CD4-positive, alpha-beta T cell (primary cell): ENCODE measurements at regions of chr21 and their contacts with region 1.

Region 1: GRCh38 chr21:46323227-46324128 is at the start of gene C21orf58:
- DNase-seq: peak; percentile 95 to 99 (median 98)
- ATAC-seq: peak; percentile 81
- H3K4me3 ChIP-seq: peak within 1 kb of the TSS; percentile 96
- H3K4me3 Mint-ChIP-seq: peak within 1 kb of the TSS; percentile 96
- H3K27ac ChIP-seq: peak within 1 kb of the TSS; percentile 96 to 100
- H3K27ac Mint-ChIP-seq: peak within 1 kb of the TSS; percentile 99
- H3K4me1 ChIP-seq: peaks cover 28% of the 10 kb centered on the region
- H3K4me1 Mint-ChIP-seq: peaks cover 39% of the 10 kb centered on the region
- H3K27me3 ChIP-seq: no peaks in the 10 kb centered on the region
- H3K27me3 Mint-ChIP-seq: no peaks in the 10 kb centered on the region
- CTCF ChIP-seq: no peak
- total RNA-seq, gene C21orf58: 2.0 to 2.8 TPM

Region 2: DNA sequence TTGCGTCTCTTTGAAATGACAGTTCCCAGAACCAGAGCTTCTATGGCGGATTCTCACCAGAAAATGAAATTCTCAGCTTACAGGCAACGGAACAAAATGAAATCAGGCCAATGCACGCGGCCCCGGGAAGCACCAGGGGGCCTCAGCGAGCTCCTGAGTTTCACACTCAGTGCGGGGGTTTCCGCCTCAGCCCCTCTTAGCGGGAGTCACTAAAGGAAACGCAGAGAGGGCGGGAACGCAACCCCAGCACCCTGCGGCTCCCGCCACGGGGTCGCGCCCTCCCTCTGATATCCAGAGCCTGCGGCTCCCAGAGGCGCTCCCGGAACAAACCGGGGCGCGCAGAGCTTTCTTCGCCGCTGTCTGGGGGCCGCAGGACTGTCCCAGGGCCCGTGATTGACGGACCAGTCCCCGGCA is 349.8 kb before region 1 on chr21:
- CTCF ChIA-PET with region 1: no interaction called
- POLR2A ChIA-PET with region 1: no interaction called
- intact Hi-C with region 1: loop called in 1 of 2 experiments (anchors 5 kb)
- DNase-seq: peak; percentile 59 to 89 (median 72)
- ATAC-seq: peak; percentile 85
- H3K4me3 ChIP-seq: peak overlapping the region; percentile 70
- H3K4me3 Mint-ChIP-seq: peak overlapping the region; percentile 93
- H3K27ac ChIP-seq: no peak overlapping the region
- H3K27ac Mint-ChIP-seq: peak overlapping the region; percentile 30
- H3K4me1 ChIP-seq: peaks cover 49% of the 10 kb centered on the region
- H3K4me1 Mint-ChIP-seq: peaks cover 14% of the 10 kb centered on the region
- H3K27me3 ChIP-seq: peaks cover 48 to 51% of the 10 kb centered on the region in 2 experiments
- H3K27me3 Mint-ChIP-seq: peaks cover 30% of the 10 kb centered on the region
- CTCF ChIP-seq: peak; percentile 78

Region 3: DNA sequence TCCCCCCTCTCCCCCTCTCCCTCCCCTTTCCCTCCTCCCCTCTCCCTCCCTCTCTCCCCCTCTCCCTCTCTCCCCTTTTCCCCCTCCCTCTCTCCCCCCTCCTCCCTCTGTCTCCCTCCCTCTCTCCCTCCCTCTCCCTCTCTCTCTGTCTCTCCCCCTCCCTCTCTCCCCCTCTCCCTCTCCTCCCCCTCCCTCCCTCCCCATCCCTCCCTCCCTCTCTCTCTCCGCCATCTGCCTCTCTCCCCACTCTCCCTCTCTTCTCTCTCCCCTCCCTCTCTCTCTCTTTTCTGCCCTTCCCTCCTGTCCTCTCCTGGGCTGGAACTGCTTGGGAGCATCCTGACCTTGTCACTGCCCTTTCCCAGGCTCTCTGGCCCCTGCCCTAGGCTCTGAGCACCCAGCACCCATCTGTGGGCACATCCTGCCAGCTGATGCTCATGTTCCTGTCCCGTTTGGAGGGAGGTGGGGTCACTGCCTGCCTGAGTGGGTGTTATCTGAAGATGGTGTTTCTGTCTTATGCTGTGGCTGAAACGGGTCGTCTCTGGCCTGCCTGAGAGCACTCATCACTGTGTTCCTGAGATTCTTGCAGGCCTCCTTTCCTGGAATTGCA is 178.9 kb before region 1 on chr21:
- CTCF ChIA-PET with region 1: interaction called, 3 read pairs
- POLR2A ChIA-PET with region 1: interaction called, 4 read pairs
- intact Hi-C with region 1: loop called in 1 of 2 experiments (anchors 5 kb)
- DNase-seq: no peak
- ATAC-seq: no peak
- H3K4me3 ChIP-seq: no peak overlapping the region
- H3K4me3 Mint-ChIP-seq: no peak overlapping the region
- H3K27ac ChIP-seq: no peak overlapping the region
- H3K27ac Mint-ChIP-seq: no peak overlapping the region
- H3K4me1 ChIP-seq: peaks cover 12% of the 10 kb centered on the region
- H3K4me1 Mint-ChIP-seq: peaks cover 8% of the 10 kb centered on the region
- H3K27me3 ChIP-seq: no peaks in the 10 kb centered on the region
- H3K27me3 Mint-ChIP-seq: no peaks in the 10 kb centered on the region
- CTCF ChIP-seq: no peak

Region 4: DNA sequence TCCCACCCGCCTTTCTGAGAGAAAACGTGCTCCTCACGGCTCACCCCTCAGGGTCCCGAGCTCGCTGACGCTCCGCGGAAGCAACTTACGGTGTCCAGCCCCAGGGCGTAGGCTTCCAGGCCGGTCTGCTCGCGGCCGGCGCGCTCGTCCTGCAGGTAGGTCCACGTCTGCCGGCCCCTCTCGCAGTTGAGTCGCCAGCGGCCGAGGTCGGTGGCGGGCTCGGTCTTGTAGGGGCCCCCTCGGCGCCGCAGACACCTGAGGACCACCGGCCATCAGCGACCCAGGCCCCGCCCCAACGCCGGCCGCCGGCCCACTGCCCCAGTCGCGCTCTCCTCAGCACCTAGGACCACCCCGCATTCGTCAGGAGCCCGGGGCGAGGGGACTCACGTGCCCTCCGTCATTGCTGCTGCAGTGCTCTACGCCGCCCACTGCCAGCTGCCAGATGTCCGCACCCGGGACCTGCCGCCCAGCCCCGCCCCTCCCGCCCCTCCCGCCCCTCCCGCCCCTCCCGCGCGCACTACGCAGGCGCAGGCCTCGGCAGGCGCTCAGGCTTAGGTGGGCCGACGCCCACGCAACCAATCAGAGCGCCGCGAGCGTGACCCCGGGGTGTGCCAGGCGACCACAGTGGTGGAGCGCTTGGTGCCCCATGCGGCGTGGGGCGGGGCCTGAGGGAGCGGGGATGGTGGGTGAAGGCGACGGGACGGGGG is 95.0 kb before region 1 on chr21 and contains the start of gene LSS:
- CTCF ChIA-PET with region 1: no interaction called
- POLR2A ChIA-PET with region 1: no interaction called
- intact Hi-C with region 1: loop called in 1 of 2 experiments (anchors 1 kb)
- DNase-seq: peak; percentile 94 to 99 (median 98)
- ATAC-seq: peak; percentile 97
- H3K4me3 ChIP-seq: peak within 1 kb of the TSS; percentile 87
- H3K4me3 Mint-ChIP-seq: peak within 1 kb of the TSS; percentile 98
- H3K27ac ChIP-seq: peak within 1 kb of the TSS in 1 of 2 donors; percentile 43
- H3K27ac Mint-ChIP-seq: peak within 1 kb of the TSS; percentile 75
- H3K4me1 ChIP-seq: peaks cover 31% of the 10 kb centered on the region
- H3K4me1 Mint-ChIP-seq: peaks cover 54% of the 10 kb centered on the region
- H3K27me3 ChIP-seq: no peaks in the 10 kb centered on the region
- H3K27me3 Mint-ChIP-seq: no peaks in the 10 kb centered on the region
- CTCF ChIP-seq: no peak
- total RNA-seq, gene LSS: 30.4 TPM

Region 5: DNA sequence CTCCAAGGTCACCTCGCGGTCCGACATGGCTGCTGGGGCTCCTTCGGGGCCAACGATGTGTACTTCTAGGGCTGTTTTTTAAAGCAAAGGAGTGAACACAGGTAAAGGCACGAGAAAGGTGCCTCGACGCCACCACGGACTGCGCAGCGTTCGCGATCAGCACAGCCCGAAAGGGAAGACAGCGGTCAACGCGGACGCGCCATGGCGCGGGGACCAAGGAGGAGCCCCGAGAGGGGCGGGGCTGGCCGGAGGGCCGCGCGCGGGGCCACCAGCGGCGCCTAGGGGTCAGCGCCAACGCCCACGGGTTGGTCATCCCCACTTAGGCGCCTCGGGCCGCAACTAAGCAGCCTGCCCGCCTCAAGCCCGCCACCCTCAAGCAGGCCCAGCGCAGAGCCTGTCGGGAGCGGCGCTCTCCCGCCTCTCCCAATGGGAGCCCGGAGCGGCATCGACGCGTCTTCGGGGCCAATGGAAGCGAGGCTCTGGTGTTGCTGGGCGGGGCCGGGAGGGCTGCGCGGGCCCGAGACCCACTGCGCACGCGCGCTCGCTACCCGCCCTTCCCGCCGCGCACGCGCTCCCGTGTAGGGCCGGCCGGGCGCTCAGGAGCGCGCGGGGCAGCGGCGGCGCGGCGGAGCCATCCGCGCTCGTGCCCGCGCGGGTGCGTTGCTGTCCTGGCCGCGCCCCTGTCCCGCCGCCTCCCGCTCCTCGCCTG is 135.0 kb after region 1 on chr21 and contains the start of gene DIP2A:
- CTCF ChIA-PET with region 1: no interaction called
- POLR2A ChIA-PET with region 1: interaction called, 3 read pairs
- intact Hi-C with region 1: loop called in 1 of 2 experiments (anchors 1 kb)
- DNase-seq: peak; percentile 85 to 99 (median 93)
- ATAC-seq: peak; percentile 97
- H3K4me3 ChIP-seq: peak within 1 kb of the TSS; percentile 89
- H3K4me3 Mint-ChIP-seq: peak within 1 kb of the TSS; percentile 94
- H3K27ac ChIP-seq: peak within 1 kb of the TSS; percentile 78 to 86
- H3K27ac Mint-ChIP-seq: peak within 1 kb of the TSS; percentile 93
- H3K4me1 ChIP-seq: peaks cover 35% of the 10 kb centered on the region
- H3K4me1 Mint-ChIP-seq: peaks cover 63% of the 10 kb centered on the region
- H3K27me3 ChIP-seq: no peaks in the 10 kb centered on the region
- H3K27me3 Mint-ChIP-seq: no peaks in the 10 kb centered on the region
- CTCF ChIP-seq: no peak
- total RNA-seq, gene DIP2A: 61.2 to 66.1 TPM